Posterior vena cava (tissue), 2 donors: ENCODE measurements at regions of chr10 and their contacts with region 1.

Region 1: DNA sequence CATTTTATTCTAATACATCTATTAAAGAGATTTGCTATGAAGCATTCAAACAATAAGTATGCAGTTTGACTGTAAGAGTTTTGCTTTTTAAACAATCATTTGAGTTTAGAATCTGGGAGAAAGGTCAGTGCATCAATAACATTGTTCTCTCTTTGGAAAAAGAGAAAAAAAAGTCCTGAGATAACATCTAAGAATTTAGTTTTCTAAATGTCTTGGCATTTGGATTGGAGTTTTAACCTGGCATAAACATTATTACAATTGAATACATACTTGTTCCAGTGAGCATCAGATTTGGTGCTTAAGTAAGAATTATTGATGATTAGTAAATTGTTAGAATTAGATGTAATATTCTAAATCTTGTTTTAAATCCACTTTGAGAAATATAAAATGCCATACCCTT is 47.2 kb upstream of the AKR1E2 start:
- DNase-seq: no peak

Region 2: DNA sequence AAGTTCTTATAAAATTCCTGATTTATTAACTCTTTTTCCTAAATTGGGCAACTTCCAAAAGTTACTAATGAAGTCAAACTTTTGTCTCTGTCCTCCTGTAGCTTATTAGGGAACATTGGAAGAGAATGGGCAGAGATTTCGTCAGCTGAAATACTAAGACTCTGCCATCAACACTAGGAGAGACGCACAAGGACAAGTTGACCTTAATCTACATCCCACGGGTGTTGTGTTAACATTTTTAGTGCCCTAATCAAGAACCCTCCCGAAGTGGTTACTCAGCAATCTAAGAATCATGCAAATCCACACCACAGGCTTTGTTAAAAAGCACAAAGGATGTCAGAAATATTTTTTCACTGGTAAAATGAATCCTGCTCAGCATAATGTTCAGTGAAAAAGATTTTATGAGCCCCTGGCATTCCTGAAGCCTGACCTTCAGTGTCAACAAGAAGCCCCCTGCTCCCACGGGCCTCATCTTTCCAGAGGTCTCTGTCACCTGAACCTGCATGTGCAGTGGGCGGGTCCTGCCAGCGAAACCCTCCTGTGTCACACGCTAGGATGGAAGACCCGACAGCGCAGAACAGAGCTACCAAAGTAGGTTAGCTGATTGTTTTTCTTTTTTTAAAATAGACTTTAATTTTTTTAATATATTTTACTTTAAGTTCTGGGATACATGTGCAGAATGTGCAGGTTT is 23.3 kb before region 1 on chr10:
- intact Hi-C with region 1: loop called in 1 of 2 experiments (anchors 2 kb)
- DNase-seq: no peak